A549 (cell line): ENCODE measurements at regions of chr15 and their contacts with region 1.

Region 1: DNA sequence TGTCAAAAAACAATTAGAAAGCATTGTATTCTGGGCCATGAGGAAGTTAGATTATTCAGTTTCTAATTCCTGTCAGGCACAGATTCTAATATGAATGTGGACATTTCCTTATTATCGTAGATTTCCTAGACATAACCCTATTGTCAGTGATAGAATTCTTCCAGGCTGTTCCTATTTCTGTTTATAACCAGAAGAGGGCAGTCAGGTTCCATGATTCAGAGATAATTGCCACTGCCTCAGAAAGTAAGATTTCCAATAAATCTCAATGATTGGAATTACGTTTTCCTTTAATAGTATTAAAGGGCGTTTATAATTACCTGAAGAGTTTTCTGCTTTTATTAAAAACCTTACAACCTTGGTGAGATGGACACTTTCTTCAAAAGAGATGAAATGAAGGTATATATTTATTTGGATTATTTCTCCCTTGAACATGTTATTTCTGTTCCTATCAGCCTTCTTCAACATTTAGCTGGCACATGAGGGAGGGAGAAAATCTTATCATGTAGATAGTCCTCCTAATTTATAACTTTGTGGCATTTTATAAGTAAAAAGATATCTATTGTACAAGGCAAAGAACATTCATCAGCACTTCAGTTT is 439.2 kb downstream of the MCTP2 start:
- DNase-seq: peak; percentile 38 to 39
- ATAC-seq: peak in 1 of 2 experiments; percentile 80; a peak in 3 of 6 replicates
- H3K4me3 ChIP-seq: no peak overlapping the region
- H3K27ac ChIP-seq: no peak overlapping the region
- H3K4me1 ChIP-seq: no peaks in the 10 kb centered on the region
- CTCF ChIP-seq: peak; percentile 87
- EP300 ChIP-seq: no peak
- POLR2A ChIP-seq: no peak
- RAD21 ChIP-seq: peak; percentile 86 to 89

Region 2: DNA sequence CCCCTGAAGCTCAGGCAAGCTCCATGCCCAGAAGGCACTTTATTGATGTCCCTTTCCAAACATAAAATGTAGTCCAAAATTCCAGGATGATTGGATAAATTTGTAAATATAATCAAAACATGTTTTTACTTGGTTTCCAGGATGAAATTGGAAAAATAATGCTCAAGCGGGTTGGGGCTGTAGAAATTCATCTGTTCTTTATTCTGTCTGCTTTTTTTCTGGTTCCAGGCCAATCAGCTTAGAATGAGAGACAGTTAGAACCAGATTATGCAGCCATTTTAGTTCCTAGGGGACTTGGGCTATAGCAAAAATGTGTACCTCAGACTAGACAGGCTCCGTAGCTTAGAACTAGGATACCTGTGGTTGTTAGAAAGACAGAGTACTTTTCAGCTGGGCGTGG is 11.6 kb after region 1 on chr15:
- CTCF ChIA-PET with region 1: interaction called, 19 read pairs
- POLR2A ChIA-PET with region 1: no interaction called
- DNase-seq: no peak
- ATAC-seq: no peak
- H3K4me3 ChIP-seq: no peak overlapping the region
- H3K27ac ChIP-seq: no peak overlapping the region
- H3K4me1 ChIP-seq: no peaks in the 10 kb centered on the region
- CTCF ChIP-seq: no peak
- EP300 ChIP-seq: no peak
- POLR2A ChIP-seq: no peak
- RAD21 ChIP-seq: no peak